ENCODE measurements at regions of chr10 and their contacts with region 1.

Region 1: DNA sequence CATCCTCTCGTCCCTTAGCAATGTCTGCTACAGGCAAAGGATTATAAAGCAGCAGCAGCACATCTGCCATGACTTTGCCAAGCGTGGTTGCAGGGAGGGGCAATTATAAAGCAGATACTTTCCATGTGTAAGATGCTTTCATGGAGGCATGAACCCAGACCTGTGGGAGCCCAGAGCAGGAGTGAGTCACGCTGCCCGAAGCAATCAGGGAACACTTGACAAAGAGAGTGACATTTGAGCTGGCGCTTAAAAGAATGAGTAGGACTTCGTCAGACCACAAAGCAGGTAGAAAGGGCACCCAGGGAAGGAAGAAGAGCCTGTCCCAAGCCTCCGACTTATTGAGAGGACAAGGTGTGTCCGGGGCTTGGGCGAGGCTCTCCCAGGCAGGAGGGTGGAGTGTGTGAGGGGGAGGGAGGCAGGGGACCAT is 147.2 kb downstream of the MYOF start:
- DNase-seq: peak; percentile 91
- H3K27ac ChIP-seq: peak overlapping the region; percentile 63
- CTCF ChIP-seq: no peak

Region 2: GRCh38 chr10:93015722-93016121 is 319.2 kb before region 1 on chr10:
- CTCF ChIA-PET with region 1: no interaction called
- POLR2A ChIA-PET with region 1: interaction called, 10 read pairs
- DNase-seq: no peak
- H3K27ac ChIP-seq: no peak overlapping the region
- CTCF ChIP-seq: no peak

Region 3: DNA sequence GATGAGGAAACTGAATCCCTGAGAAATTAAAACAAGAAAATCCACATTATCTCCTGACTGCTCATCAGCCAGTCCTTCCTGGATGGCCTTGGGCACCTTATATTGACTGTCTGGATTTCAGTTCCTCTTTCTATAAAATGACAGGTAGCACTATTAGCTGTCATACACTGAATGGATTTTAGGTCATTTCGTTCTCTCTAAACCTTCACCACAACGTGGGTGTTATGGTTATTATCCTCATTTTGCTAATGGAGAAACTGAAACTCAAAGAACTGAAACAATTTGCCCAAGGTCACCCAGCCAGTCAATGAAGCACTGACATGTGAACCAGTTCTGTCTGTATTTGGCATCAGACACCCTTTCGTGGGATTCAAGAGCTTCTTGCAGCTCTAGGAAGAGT is 67.4 kb before region 1 on chr10:
- CTCF ChIA-PET with region 1: no interaction called
- POLR2A ChIA-PET with region 1: no interaction called
- DNase-seq: no peak
- H3K27ac ChIP-seq: no peak overlapping the region
- CTCF ChIP-seq: no peak

Region 4: GRCh38 chr10:93485690-93486089 is 150.8 kb after region 1 on chr10:
- CTCF ChIA-PET with region 1: no interaction called
- POLR2A ChIA-PET with region 1: no interaction called
- DNase-seq: no peak
- H3K27ac ChIP-seq: no peak overlapping the region
- CTCF ChIP-seq: no peak

Measured in RWPE1 (cell line).